Heart left ventricle (tissue), 16 donors: ENCODE measurements at regions of chr15 and their contacts with region 1.

Region 1: GRCh38 chr15:99096894-99097426 is 7.9 kb upstream of the SYNM start:
- DNase-seq: no peak
- ATAC-seq: no peak
- H3K4me3 ChIP-seq: no peak overlapping the region
- H3K27ac ChIP-seq: peak overlapping the region in 1 of 12 donors; percentile 66
- H3K4me1 ChIP-seq: peaks cover 0 to 10% (median 3%) of the 10 kb centered on the region in 12 donors
- H3K27me3 ChIP-seq: peaks cover 0 to 14% (median 0%) of the 10 kb centered on the region in 9 donors
- CTCF ChIP-seq: no peak
- POLR2A ChIP-seq: no peak

Region 2: GRCh38 chr15:99029341-99030144 is 67.4 kb before region 1 on chr15:
- intact Hi-C with region 1: no loop called
- DNase-seq: peak in 1 of 5 donors; percentile 42
- ATAC-seq: peak in 1 of 4 donors; percentile 58
- H3K4me3 ChIP-seq: no peak overlapping the region
- H3K27ac ChIP-seq: no peak overlapping the region
- H3K4me1 ChIP-seq: peaks cover 0 to 5% (median 0%) of the 10 kb centered on the region in 12 donors
- H3K27me3 ChIP-seq: no peaks in the 10 kb centered on the region
- CTCF ChIP-seq: no peak
- POLR2A ChIP-seq: no peak

Region 3: GRCh38 chr15:99224372-99225214 is 127.6 kb after region 1 on chr15:
- intact Hi-C with region 1: no loop called
- DNase-seq: no peak
- ATAC-seq: no peak
- H3K4me3 ChIP-seq: no peak overlapping the region
- H3K27ac ChIP-seq: no peak overlapping the region
- H3K4me1 ChIP-seq: peaks cover 0 to 6% (median 0%) of the 10 kb centered on the region in 12 donors
- H3K27me3 ChIP-seq: no peaks in the 10 kb centered on the region
- CTCF ChIP-seq: no peak
- POLR2A ChIP-seq: no peak

Region 4: GRCh38 chr15:99361541-99362185 is 264.7 kb after region 1 on chr15:
- intact Hi-C with region 1: loop called in 1 of 10 experiments (anchors 5 kb)
- DNase-seq: no peak
- ATAC-seq: no peak
- H3K4me3 ChIP-seq: no peak overlapping the region
- H3K27ac ChIP-seq: no peak overlapping the region
- H3K4me1 ChIP-seq: no peaks in the 10 kb centered on the region
- H3K27me3 ChIP-seq: no peaks in the 10 kb centered on the region
- CTCF ChIP-seq: peak; percentile 27 to 60 (median 42)
- POLR2A ChIP-seq: no peak